Heart left ventricle (tissue), 16 donors: ENCODE measurements at regions of chr3 and their contacts with region 1.

Region 1: GRCh38 chr3:128482666-128483656 is 10.0 kb downstream of the GATA2 start:
- DNase-seq: peak; percentile 25 to 63 (median 60)
- ATAC-seq: peak in 3 of 4 donors; percentile 16 to 58 (median 35)
- H3K4me3 ChIP-seq: peak overlapping the region; percentile 25 to 84 (median 69)
- H3K27ac ChIP-seq: peak overlapping the region; percentile 63 to 98 (median 84)
- H3K4me1 ChIP-seq: peaks cover 0 to 82% (median 44%) of the 10 kb centered on the region in 12 donors
- H3K27me3 ChIP-seq: peaks cover 20 to 86% (median 52%) of the 10 kb centered on the region in 9 donors
- CTCF ChIP-seq: peak in 4 of 12 donors; percentile 10 to 36 (median 18)
- POLR2A ChIP-seq: peak in 1 of 2 donors; percentile 36

Region 2: GRCh38 chr3:128426128-128426921 is 56.6 kb before region 1 on chr3:
- intact Hi-C with region 1: loop called in 2 of 10 experiments (anchors 5 kb)
- DNase-seq: peak in 4 of 5 donors; percentile 36 to 83 (median 46)
- ATAC-seq: peak; percentile 21 to 93 (median 80)
- H3K4me3 ChIP-seq: peak overlapping the region in 10 of 12 donors; percentile 12 to 50 (median 34)
- H3K27ac ChIP-seq: no peak overlapping the region
- H3K4me1 ChIP-seq: peaks cover 0 to 14% (median 4%) of the 10 kb centered on the region in 12 donors
- H3K27me3 ChIP-seq: peaks cover 0 to 30% (median 1%) of the 10 kb centered on the region in 9 donors
- CTCF ChIP-seq: peak; percentile 52 to 99 (median 89)
- POLR2A ChIP-seq: no peak

Region 3: GRCh38 chr3:128432971-128433704 is 49.8 kb before region 1 on chr3:
- intact Hi-C with region 1: loop called in 2 of 10 experiments (anchors 5 kb)
- DNase-seq: no peak
- ATAC-seq: peak in 3 of 4 donors; percentile 28 to 43 (median 41)
- H3K4me3 ChIP-seq: peak overlapping the region; percentile 11 to 50 (median 39)
- H3K27ac ChIP-seq: no peak overlapping the region
- H3K4me1 ChIP-seq: peaks cover 0 to 14% (median 5%) of the 10 kb centered on the region in 12 donors
- H3K27me3 ChIP-seq: peaks cover 8 to 54% (median 30%) of the 10 kb centered on the region in 9 donors
- CTCF ChIP-seq: peak in 1 of 12 donors; percentile 9
- POLR2A ChIP-seq: no peak

Region 4: DNA sequence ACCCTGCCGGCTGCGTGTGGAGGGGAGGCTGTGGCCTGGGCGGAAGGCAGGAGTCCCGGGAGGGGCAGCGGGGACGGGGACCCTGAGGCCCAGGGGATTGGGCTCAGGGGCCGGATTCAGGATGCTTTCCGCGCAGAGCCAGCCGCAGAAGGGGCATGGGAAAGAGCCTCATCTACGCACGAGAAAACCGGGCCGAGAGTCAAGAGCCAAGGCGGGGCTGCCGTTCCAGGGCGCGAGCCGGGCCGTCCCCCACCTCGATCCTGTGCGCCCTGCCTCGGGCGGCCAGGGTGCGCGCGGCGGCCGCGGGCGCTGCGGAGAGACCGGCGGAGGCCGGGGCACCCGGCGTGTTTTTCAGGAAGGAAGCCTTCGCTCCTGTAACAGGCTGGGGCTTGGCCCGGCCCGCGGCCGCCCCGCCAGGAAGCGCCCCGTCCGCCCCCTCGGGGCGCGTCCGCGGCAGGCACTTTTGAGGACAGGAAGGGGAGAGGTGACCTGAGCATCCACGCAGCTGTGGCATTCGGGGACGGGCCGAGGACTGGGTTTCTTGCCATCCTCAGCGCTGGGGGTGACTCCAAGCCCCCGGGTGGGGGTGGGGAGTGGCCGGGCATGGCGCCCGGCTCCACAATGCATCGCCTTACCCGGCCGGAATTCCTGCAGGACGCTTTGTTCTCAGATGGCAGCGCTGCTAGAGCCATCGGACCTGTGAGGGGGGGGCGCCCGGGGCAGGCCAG is 72.3 kb after region 1 on chr3:
- intact Hi-C with region 1: loop called in 2 of 10 experiments (anchors 2 to 5 kb)
- DNase-seq: peak; percentile 63 to 84 (median 67)
- ATAC-seq: peak; percentile 63 to 75 (median 74)
- H3K4me3 ChIP-seq: peak overlapping the region in 7 of 12 donors; percentile 4 to 31 (median 28)
- H3K27ac ChIP-seq: peak overlapping the region; percentile 45 to 81 (median 69)
- H3K4me1 ChIP-seq: peaks cover 0 to 28% (median 11%) of the 10 kb centered on the region in 12 donors
- H3K27me3 ChIP-seq: peaks cover 0 to 50% (median 26%) of the 10 kb centered on the region in 9 donors
- CTCF ChIP-seq: no peak
- POLR2A ChIP-seq: peak in 1 of 2 donors; percentile 26

Region 5: GRCh38 chr3:128572644-128573105 is 89.7 kb after region 1 on chr3:
- intact Hi-C with region 1: loop called in 4 of 10 experiments (anchors 5 kb)
- DNase-seq: no peak
- ATAC-seq: no peak
- H3K4me3 ChIP-seq: no peak overlapping the region
- H3K27ac ChIP-seq: peak overlapping the region in 1 of 12 donors; percentile 76
- H3K4me1 ChIP-seq: peaks cover 0 to 33% (median 16%) of the 10 kb centered on the region in 12 donors
- H3K27me3 ChIP-seq: peaks cover 0 to 17% (median 0%) of the 10 kb centered on the region in 9 donors
- CTCF ChIP-seq: peak in 4 of 12 donors; percentile 20 to 26 (median 24)
- POLR2A ChIP-seq: no peak